ENCODE measurements at regions of chr9 and their contacts with region 1.

Region 1: DNA sequence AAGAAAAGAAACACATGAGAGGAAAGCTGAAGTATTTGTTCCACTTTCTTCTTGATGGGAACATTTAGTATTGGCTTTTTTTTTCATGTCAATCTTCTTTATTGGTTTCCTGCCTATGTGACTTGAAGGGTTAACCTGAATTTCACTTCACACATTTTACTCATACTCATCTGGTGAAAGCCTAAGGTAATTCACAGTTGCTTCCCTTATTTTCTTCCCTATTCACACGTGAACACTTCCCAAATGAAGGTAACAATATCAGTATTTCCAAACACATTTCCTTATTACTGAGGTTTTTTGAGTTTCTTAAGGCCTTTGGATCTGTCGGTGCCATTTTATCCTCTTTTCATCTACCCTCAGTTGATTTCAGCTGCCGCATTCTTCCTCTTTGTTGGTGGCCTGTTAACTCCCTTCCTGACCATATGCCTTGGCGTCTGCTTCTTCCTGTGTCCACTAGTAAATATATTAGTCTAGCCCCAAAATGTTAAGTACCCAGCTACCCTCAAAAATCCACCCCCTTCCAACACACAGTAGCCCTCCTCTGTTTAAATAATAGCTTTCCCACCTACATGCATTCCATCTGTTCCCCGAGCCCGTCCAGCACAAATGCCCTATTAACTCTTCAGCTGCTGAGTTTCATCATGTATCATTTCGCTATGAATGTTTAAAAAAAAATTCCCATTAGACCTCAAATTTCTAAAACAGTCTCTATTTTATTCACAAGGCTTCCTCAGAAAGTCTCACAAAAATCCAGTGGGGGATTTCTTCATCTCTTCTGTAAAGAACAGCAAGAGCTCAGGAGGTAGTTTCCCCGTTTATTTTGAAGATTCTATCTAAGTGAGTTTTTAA is 97.3 kb downstream of the USP20 start:
- DNase-seq: no peak
- ATAC-seq: peak; percentile 31
- H3K4me3 Mint-ChIP-seq: peak overlapping the region; percentile 62
- H3K27ac Mint-ChIP-seq: peak overlapping the region; percentile 88
- H3K4me1 Mint-ChIP-seq: peaks cover 60% of the 10 kb centered on the region
- H3K27me3 Mint-ChIP-seq: no peaks in the 10 kb centered on the region

Region 2: DNA sequence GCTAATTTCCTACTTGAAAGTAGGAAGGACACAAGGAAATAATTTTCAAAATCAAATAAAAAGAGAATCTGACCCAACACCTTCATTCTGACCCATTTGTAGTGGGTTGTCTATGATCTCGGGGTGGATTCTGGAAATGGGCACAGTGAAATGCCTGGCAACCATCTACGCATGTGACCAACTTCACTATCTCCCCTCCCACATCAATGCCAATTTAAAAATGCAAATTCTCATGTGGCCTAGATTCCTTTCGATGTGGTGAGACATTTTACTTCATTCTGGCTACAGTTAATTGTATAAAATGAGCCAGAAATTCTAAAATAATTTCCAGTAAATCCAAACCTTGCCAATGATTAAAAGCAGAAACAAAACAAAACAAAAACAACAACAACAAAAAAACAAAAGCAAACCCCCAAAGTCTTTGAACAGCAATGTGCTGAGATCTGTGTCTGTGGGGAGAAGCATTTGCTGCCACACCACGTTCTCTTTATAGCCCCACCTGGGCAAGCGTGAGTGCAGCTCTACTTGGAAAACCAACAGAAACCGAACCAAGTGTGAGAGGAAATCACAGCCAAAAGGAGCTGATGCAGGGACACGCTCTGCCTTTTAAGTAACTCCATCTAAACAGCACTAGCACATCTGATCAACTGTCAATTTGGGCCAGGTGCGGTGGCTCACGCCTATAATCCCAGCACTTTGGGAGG is 38.3 kb before region 1 on chr9:
- CTCF ChIA-PET with region 1: interaction called, 12 read pairs
- DNase-seq: peak; percentile 61
- ATAC-seq: no peak
- H3K4me3 Mint-ChIP-seq: peak overlapping the region; percentile 42
- H3K27ac Mint-ChIP-seq: peak overlapping the region; percentile 90
- H3K4me1 Mint-ChIP-seq: peaks cover 79% of the 10 kb centered on the region
- H3K27me3 Mint-ChIP-seq: no peaks in the 10 kb centered on the region